WTC11 (cell line): ENCODE measurements at regions of chr16 and their contacts with region 1.

Region 1: GRCh38 chr16:82456683-82457082 is 170.1 kb upstream of the CDH13 start:
- DNase-seq: peak; percentile 73
- ATAC-seq: peak; percentile 98
- H3K4me3 Mint-ChIP-seq: no peak overlapping the region
- H3K27ac Mint-ChIP-seq: no peak overlapping the region
- H3K4me1 Mint-ChIP-seq: no peaks in the 10 kb centered on the region; the same call in 1 of the 2 replicates
- H3K27me3 Mint-ChIP-seq: no peaks in the 10 kb centered on the region
- CTCF ChIP-seq: peak; percentile 56

Region 2: GRCh38 chr16:82240111-82240510 is 216.6 kb before region 1 on chr16:
- CTCF ChIA-PET with region 1: interaction called, 13 read pairs
- POLR2A ChIA-PET with region 1: no interaction called
- DNase-seq: no peak
- ATAC-seq: no peak
- H3K4me3 Mint-ChIP-seq: no peak overlapping the region
- H3K27ac Mint-ChIP-seq: no peak overlapping the region
- H3K4me1 Mint-ChIP-seq: peaks cover 8% of the 10 kb centered on the region
- H3K27me3 Mint-ChIP-seq: 0 out of 2 replicates have a peak, but pooled peaks cover 2% of the 10 kb centered on the region
- CTCF ChIP-seq: no peak

Region 3: DNA sequence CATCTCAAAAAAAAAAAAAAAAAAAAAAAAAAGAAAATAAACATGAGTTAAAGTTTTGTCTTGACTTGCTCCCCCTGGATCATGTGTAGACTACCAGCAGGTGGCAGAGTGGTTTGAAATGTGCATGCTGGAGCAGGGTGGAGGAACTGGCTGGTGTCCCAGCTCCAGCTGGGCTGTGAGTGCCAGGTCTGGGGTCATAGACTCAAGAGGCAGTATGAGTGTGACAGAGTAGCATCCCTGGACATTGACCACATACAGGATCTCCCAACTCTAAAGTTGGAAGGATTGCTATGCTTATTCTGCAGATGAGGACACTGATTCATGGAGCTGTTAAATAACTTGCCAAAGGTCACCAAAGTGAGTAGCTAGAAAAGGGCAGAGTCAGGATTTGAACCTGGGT is 88.6 kb before region 1 on chr16:
- CTCF ChIA-PET with region 1: interaction called, 25 read pairs
- POLR2A ChIA-PET with region 1: no interaction called
- DNase-seq: peak; percentile 46
- ATAC-seq: peak; percentile 85
- H3K4me3 Mint-ChIP-seq: no peak overlapping the region
- H3K27ac Mint-ChIP-seq: no peak overlapping the region
- H3K4me1 Mint-ChIP-seq: no peaks in the 10 kb centered on the region
- H3K27me3 Mint-ChIP-seq: no peaks in the 10 kb centered on the region; the same call in 1 of the 2 replicates
- CTCF ChIP-seq: no peak

Region 4: GRCh38 chr16:82470620-82471152 is 14.0 kb after region 1 on chr16:
- CTCF ChIA-PET with region 1: interaction called, 14 read pairs
- POLR2A ChIA-PET with region 1: no interaction called
- DNase-seq: no peak
- ATAC-seq: no peak
- H3K4me3 Mint-ChIP-seq: no peak overlapping the region
- H3K27ac Mint-ChIP-seq: no peak overlapping the region
- H3K4me1 Mint-ChIP-seq: no peaks in the 10 kb centered on the region
- H3K27me3 Mint-ChIP-seq: no peaks in the 10 kb centered on the region
- CTCF ChIP-seq: no peak

Region 5: DNA sequence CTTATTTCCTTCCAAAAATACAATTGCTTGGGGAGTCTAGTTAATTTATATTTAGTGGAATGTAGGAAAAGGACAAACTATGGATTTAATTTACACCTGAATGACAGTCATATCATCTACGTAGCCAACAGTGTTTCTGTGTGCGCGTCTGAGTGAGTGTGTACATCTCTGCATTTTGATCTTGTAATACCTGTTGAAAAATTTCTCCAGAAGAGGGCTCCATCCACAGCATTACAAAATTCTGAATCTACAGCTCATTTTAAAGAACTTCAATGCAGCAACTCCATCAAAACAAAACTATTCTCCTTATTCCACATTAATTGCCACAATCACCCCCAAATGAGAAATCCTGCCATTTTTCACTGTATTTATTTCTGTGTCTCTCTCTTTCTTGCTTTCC is 174.0 kb after region 1 on chr16:
- CTCF ChIA-PET with region 1: interaction called, 19 read pairs
- POLR2A ChIA-PET with region 1: no interaction called
- DNase-seq: no peak
- ATAC-seq: no peak
- H3K4me3 Mint-ChIP-seq: no peak overlapping the region
- H3K27ac Mint-ChIP-seq: no peak overlapping the region
- H3K4me1 Mint-ChIP-seq: peaks cover 30% of the 10 kb centered on the region
- H3K27me3 Mint-ChIP-seq: peaks cover 43% of the 10 kb centered on the region
- CTCF ChIP-seq: no peak